ENCODE measurements at regions of chr19 and their contacts with region 1.

Region 1: DNA sequence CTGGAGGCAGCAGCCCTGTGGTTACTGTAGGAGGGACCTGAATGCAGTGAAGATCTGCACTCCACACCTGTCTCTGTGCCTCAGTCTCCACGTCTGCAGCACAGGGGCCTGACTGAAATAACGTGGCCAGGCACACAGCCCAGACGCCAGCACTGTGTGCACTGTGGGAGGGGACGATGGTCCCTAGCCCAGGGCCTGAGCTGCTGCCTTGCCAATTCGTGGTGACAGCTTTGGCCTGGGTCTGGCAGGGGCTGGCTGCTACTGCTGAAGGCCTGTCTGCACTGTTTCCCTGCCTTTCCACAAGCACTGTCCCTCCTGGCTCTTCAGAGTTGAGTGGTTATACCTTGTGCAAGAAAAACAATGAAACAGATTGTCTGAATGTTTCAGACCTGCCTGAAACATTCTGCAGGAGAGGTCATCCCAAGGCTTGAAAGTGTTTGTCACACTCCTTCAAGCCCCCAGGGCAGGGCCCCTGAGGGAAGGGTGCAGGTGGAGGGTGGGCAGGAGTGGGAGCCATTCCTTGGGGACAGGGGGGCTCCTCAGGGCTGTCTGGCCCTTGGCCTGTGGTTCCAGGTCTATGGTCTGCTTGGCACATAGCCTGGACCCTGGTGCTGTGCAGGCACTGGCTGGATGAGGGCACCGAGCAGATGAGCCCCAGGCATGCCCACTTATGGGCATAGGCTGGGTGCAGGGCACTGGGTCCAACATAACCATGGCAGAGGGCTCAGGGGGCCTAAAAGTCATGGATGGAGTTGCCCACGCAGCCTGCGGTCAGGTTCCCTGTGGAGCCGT is 38.7 kb upstream of the LDLR start:
- DNase-seq: no peak
- H3K4me3 ChIP-seq: no peak overlapping the region
- H3K27ac ChIP-seq: peak overlapping the region; percentile 91
- H3K4me1 ChIP-seq: peaks cover 83% of the 10 kb centered on the region
- CTCF ChIP-seq: no peak

Region 2: DNA sequence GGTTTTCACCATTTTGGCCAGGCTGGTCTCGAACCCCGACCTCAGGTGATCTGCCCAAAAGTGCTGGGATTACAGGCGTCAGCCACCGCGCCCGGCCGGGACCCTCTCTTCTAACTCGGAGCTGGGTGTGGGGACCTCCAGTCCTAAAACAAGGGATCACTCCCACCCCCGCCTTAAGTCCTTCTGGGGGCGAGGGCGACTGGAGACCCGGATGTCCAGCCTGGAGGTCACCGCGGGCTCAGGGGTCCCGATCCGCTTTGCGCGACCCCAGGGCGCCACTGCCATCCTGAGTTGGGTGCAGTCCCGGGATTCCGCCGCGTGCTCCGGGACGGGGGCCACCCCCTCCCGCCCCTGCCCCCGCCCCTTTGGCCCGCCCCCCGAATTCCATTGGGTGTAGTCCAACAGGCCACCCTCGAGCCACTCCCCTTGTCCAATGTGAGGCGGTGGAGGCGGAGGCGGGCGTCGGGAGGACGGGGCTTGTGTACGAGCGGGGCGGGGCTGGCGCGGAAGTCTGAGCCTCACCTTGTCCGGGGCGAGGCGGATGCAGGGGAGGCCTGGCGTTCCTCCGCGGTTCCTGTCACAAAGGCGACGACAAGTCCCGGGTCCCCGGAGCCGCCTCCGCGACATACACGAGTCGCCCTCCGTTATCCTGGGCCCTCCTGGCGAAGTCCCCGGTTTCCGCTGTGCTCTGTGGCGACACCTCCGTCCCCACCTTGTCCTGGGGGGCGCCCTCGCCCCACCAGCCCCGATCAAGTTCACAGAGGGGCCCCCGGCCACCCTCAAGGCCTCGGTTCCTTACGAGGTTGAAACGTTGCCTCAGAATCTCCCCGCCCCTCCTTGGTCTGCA is 39.8 kb after region 1 on chr19:
- CTCF ChIA-PET with region 1: no interaction called
- POLR2A ChIA-PET with region 1: interaction called, 4 read pairs
- intact Hi-C with region 1: loop called (anchors 1 kb)
- DNase-seq: peak; percentile 98
- H3K4me3 ChIP-seq: peak overlapping the region; percentile 82
- H3K27ac ChIP-seq: peak overlapping the region; percentile 91
- H3K4me1 ChIP-seq: peaks cover 48% of the 10 kb centered on the region
- CTCF ChIP-seq: no peak; the same call in 1 of the 2 replicates

Region 3: GRCh38 chr19:11191273-11191755 is 140.8 kb after region 1 on chr19:
- CTCF ChIA-PET with region 1: interaction called, 3 read pairs
- POLR2A ChIA-PET with region 1: no interaction called
- intact Hi-C with region 1: loop called (anchors 5 kb)
- DNase-seq: peak; percentile 75
- H3K4me3 ChIP-seq: peak overlapping the region; percentile 58
- H3K27ac ChIP-seq: peak overlapping the region; percentile 95
- H3K4me1 ChIP-seq: peaks cover 93% of the 10 kb centered on the region
- CTCF ChIP-seq: no peak

Region 4: GRCh38 chr19:11242864-11243797 is 192.6 kb after region 1 on chr19:
- CTCF ChIA-PET with region 1: interaction called, 12 read pairs
- POLR2A ChIA-PET with region 1: no interaction called
- intact Hi-C with region 1: no loop called
- DNase-seq: peak; percentile 81
- H3K4me3 ChIP-seq: no peak overlapping the region
- H3K27ac ChIP-seq: no peak overlapping the region
- H3K4me1 ChIP-seq: no peaks in the 10 kb centered on the region
- CTCF ChIP-seq: peak; percentile 89